Panc1 (cell line): ENCODE measurements at regions of chr12 and their contacts with region 1.

Region 1: GRCh38 chr12:104921340-104921739 is 36.8 kb downstream of the SLC41A2 start:
- DNase-seq: no peak
- ATAC-seq: no peak
- H3K4me3 ChIP-seq: no peak overlapping the region
- H3K27ac ChIP-seq: no peak overlapping the region
- H3K4me1 ChIP-seq: no peaks in the 10 kb centered on the region
- H3K27me3 ChIP-seq: no peaks in the 10 kb centered on the region
- CTCF ChIP-seq: no peak

Region 2: DNA sequence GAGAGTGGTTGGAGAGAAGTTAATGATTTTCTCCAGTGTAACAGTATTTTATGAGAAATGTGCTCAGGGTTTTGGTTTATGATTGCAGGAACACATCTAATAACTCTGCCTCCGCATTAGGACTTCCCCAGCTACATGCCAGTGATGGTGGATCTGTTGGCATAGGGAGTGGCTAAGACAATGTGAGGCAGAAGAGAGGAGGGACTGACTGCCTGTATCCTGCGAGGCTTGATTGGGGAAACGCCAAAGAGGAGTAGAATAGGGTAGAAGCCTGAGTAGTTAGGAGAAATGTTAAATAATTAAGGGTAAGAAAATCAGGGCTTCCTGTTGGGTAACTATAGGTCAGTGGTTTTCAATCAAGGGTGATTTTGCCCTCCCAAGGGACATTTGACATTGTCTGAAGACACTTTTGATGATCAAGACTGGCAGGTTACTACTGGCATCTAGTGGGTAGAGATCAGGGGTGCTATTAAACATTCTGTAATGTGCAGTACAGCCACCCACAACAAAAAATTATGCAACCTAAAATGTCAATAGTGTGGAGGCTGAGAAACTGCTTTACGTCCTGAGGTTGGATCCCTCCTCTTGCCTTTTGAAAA is 942.9 kb before region 1 on chr12:
- CTCF ChIA-PET with region 1: no interaction called
- POLR2A ChIA-PET with region 1: no interaction called
- in situ Hi-C with region 1: no loop called
- intact Hi-C with region 1: no loop called
- DNase-seq: no peak
- ATAC-seq: no peak
- H3K4me3 ChIP-seq: no peak overlapping the region
- H3K27ac ChIP-seq: no peak overlapping the region
- H3K4me1 ChIP-seq: no peaks in the 10 kb centered on the region
- H3K27me3 ChIP-seq: no peaks in the 10 kb centered on the region
- CTCF ChIP-seq: no peak

Region 3: GRCh38 chr12:104494137-104494792 is 427.1 kb before region 1 on chr12:
- CTCF ChIA-PET with region 1: no interaction called
- POLR2A ChIA-PET with region 1: no interaction called
- in situ Hi-C with region 1: no loop called
- intact Hi-C with region 1: no loop called
- DNase-seq: no peak
- ATAC-seq: no peak
- H3K4me3 ChIP-seq: no peak overlapping the region
- H3K27ac ChIP-seq: no peak overlapping the region
- H3K4me1 ChIP-seq: no peaks in the 10 kb centered on the region
- H3K27me3 ChIP-seq: no peaks in the 10 kb centered on the region
- CTCF ChIP-seq: no peak

Region 4: DNA sequence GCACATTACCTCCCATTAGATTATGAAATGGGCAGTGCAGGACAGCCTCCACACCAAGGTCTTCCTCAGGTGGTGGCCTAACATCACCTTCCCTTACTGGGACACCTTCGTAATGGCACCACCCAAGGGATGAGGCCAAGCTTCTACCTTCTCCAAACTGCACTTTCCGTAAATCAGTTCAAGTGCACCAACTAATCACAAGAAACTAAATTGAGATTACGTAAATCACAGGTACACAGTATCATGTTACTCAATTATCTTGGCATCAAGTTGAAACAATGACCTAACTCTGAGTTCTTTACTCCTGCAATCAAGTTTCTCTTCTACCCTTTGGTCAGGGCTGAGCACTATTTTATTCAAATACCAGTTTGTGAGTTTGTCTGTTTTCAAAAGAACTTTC is 22.9 kb after region 1 on chr12:
- CTCF ChIA-PET with region 1: no interaction called
- POLR2A ChIA-PET with region 1: interaction called, 11 read pairs
- in situ Hi-C with region 1: no loop called
- intact Hi-C with region 1: loop called (anchors 1 kb)
- DNase-seq: no peak
- ATAC-seq: no peak
- H3K4me3 ChIP-seq: no peak overlapping the region
- H3K27ac ChIP-seq: no peak overlapping the region
- H3K4me1 ChIP-seq: no peaks in the 10 kb centered on the region
- H3K27me3 ChIP-seq: no peaks in the 10 kb centered on the region
- CTCF ChIP-seq: no peak

Region 5: DNA sequence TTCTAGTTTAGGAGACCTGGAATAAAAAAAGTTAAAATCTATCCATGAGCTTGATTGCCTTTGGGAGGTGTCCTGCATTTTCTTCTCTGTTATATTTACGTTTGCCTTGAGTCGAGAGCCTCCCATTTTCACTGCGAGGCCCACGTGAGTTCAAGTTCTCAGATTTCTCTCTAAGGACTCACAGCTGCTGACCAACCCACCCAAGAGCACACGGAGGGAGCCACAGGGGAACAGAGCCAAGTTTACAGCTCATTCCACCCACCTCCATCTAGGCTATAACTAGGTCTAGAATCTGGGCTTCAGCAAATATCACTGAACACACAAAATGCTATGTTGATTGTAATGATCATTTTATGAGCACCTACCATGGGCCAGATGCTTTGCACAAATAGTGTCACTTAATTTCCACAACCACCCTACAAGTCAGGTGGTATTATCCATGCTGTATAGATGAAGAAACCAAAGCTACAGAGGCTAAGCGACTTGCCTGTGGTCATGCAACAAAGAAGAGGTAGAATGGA is 146.2 kb after region 1 on chr12:
- CTCF ChIA-PET with region 1: no interaction called
- POLR2A ChIA-PET with region 1: no interaction called
- in situ Hi-C with region 1: no loop called
- intact Hi-C with region 1: no loop called
- DNase-seq: no peak
- ATAC-seq: no peak
- H3K4me3 ChIP-seq: no peak overlapping the region
- H3K27ac ChIP-seq: no peak overlapping the region
- H3K4me1 ChIP-seq: peaks cover 7% of the 10 kb centered on the region; the same call in 1 of the 2 replicates
- H3K27me3 ChIP-seq: no peaks in the 10 kb centered on the region
- CTCF ChIP-seq: no peak

Region 6: GRCh38 chr12:105164068-105164467 is 242.7 kb after region 1 on chr12:
- CTCF ChIA-PET with region 1: no interaction called
- POLR2A ChIA-PET with region 1: no interaction called
- in situ Hi-C with region 1: no loop called
- intact Hi-C with region 1: no loop called
- DNase-seq: no peak
- ATAC-seq: no peak
- H3K4me3 ChIP-seq: no peak overlapping the region
- H3K27ac ChIP-seq: no peak overlapping the region
- H3K4me1 ChIP-seq: no peaks in the 10 kb centered on the region
- H3K27me3 ChIP-seq: no peaks in the 10 kb centered on the region
- CTCF ChIP-seq: no peak